AG04449 (cell line): ENCODE measurements at regions of chr1 and their contacts with region 1.

Region 1: DNA sequence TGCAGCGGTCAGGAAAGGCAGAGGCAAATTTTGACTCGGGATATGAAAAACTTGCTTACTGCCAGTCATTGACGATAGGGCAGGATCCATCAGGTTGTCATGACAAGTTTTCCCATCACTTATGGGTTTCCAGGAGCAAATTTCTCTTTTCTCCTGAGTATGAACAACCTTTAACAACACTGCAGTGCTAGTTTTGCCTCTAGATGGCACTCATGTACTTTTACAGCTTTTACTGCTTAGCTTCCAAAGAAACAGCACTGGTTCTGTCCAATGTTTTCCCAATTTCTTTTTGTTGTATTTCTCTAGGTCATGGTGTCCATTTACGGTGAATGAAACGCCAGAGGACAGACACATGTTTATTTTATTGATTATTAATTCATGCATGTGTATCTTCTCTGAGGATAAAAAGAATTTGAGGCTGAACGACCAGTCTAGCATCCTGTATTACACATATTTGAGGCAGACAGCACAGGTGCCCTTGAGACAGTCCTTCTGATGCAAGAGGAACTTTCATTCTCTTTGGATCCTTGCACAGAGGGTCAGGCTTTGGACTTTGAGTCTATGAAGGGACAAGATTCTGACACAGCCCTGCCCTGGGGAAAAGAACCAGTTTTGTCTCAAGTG is 112.3 kb upstream of the TRABD2B start:
- DNase-seq: peak; percentile 14
- H3K4me3 ChIP-seq: no peak overlapping the region
- CTCF ChIP-seq: peak; percentile 56

Region 2: DNA sequence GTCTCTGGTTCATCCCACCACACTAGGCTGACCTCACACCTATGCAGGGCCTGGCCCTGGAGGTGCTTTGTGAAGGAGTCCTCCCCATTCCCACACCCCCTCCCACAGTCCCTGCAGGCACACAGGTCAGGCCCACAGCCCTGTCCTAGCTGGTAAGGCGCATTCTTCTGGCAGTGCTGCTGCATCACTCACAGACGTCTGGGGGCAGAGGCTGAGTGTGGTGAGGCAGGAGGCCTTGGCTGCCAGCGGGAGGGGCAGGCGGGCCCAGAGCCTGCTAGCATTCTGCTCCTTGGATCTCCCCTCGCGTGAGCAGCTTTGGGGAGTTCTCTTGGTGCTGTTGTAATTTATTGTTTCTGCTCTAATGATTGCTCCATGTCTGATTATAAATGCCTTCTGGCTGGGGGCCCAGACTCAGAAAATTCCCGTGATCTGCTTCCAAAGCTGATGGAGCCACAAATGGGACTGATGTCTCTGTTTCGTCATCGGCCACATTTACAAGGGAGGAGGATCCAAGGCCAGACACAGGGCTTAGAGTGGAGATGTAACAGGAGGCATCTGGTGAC is 175.2 kb before region 1 on chr1:
- CTCF ChIA-PET with region 1: no interaction called
- POLR2A ChIA-PET with region 1: no interaction called
- DNase-seq: no peak
- H3K4me3 ChIP-seq: no peak overlapping the region
- CTCF ChIP-seq: no peak

Region 3: DNA sequence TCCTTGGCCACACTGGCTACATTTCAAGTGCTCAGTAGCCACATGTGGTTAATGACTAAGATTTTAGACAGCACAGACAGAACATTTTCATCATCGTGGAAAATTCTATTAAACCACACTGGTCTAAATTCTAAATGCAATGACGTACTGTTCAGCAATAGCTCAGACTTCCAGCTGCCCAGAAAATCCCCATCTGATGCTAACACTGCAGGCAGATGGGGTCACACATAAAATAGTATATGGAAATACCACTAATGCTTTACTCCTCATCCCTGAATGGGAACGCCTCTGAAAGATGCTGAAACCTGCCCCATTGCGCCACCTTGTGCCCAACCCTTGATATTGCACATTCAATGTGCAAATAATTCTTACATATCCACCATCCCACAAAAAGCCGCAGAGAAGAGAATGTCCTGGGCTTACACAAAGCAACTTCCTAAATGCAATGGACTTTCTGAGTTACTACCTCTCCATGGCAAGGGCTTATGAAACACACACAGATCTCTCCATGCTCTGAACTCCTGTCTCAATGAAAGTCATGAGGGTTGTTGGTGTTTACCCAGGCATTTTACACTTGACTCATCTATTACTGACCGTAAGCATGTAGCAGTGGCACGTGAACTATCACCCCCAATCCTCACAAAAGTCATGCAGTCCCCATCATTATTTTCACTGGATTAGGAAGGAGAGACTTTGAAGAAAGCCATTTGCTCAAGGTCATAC is 92.7 kb after region 1 on chr1:
- CTCF ChIA-PET with region 1: interaction called, 37 read pairs
- POLR2A ChIA-PET with region 1: no interaction called
- DNase-seq: peak; percentile 51
- H3K4me3 ChIP-seq: no peak overlapping the region
- CTCF ChIP-seq: peak; percentile 77

Region 4: GRCh38 chr1:48236716-48237470 is 127.4 kb after region 1 on chr1:
- CTCF ChIA-PET with region 1: interaction called, 11 read pairs
- POLR2A ChIA-PET with region 1: no interaction called
- DNase-seq: no peak
- H3K4me3 ChIP-seq: no peak overlapping the region
- CTCF ChIP-seq: peak; percentile 51

Region 5: DNA sequence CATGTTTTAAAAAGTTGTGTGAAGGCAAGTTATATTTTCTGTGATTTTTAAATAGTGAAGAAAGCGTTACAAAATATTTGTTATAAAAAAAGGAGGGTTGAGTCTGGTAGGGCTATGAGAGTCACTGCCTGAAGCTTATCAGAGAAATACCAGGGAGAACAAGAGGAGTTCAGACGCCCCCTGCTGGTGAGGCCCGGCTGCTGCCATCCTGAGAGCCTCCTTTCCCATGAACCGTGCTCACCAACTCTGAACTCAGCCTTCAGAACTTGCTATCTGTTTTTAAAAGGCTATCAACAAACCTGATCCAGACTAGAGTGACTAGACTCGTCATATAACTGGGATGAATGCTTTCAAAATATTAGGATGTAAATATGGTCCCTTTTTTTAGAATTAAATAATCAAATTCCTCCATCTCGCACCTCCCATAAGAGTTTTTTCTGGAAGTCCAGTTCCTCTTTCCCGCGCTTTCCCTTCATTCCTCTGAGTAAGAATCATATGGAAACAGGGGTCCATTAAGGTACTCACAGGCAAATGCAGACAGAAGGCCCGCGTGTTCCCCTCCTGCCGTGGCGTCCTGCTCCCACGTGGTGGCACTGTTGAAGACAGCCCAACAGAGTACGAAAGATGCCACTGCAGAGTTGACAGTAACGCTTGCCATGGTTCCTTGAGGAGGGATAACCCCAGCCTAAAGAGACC is 388.7 kb after region 1 on chr1:
- CTCF ChIA-PET with region 1: interaction called, 25 read pairs
- POLR2A ChIA-PET with region 1: no interaction called
- DNase-seq: peak; percentile 14
- H3K4me3 ChIP-seq: no peak overlapping the region
- CTCF ChIP-seq: peak; percentile 97